Esophagus muscularis mucosa (tissue), 4 donors: ENCODE measurements at regions of chr20 and their contacts with region 1.

Region 1: GRCh38 chr20:3901706-3902440 is 12.7 kb downstream of the PANK2 start:
- DNase-seq: no peak
- H3K4me3 ChIP-seq: peak overlapping the region in 3 of 4 donors; percentile 8 to 13 (median 11)
- H3K27ac ChIP-seq: peak overlapping the region; percentile 15 to 47 (median 24)
- H3K4me1 ChIP-seq: peaks cover 35 to 89% (median 81%) of the 10 kb centered on the region in 4 donors
- H3K27me3 ChIP-seq: no peaks in the 10 kb centered on the region
- CTCF ChIP-seq: no peak
- EP300 ChIP-seq: no peak
- POLR2A ChIP-seq: no peak

Region 2: DNA sequence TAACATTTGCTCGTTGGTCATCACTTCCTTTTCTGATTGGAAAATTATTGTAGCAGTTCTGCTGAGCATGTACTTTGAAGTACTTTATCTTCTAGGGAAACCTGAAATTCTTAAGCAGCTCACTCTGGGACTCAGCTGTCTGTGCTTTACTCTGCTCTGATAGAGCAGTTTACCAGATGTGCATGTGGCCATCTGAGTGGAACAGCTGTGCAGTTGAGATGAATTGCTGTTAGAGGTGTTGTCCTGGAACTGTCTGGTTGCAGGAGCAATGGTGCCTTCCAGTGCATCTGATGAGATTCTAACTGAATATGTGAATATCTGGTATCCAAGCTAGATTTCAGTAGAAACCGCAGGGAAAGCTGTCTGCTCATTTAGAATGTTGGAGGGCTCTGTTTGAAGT is 14.5 kb after region 1 on chr20:
- intact Hi-C with region 1: loop called (anchors 1 kb)
- DNase-seq: no peak
- H3K4me3 ChIP-seq: no peak overlapping the region
- H3K27ac ChIP-seq: no peak overlapping the region
- H3K4me1 ChIP-seq: peaks cover 4 to 24% (median 21%) of the 10 kb centered on the region in 4 donors
- H3K27me3 ChIP-seq: no peaks in the 10 kb centered on the region
- CTCF ChIP-seq: no peak
- EP300 ChIP-seq: no peak
- POLR2A ChIP-seq: no peak

Region 3: GRCh38 chr20:4195499-4195898 is 293.6 kb after region 1 on chr20:
- intact Hi-C with region 1: no loop called
- DNase-seq: no peak
- H3K4me3 ChIP-seq: no peak overlapping the region
- H3K27ac ChIP-seq: no peak overlapping the region
- H3K4me1 ChIP-seq: no peaks in the 10 kb centered on the region
- H3K27me3 ChIP-seq: peaks cover 0 to 6% (median 0%) of the 10 kb centered on the region in 4 donors
- CTCF ChIP-seq: peak in 1 of 3 experiments; percentile 27
- EP300 ChIP-seq: no peak
- POLR2A ChIP-seq: no peak